Ovary (tissue), 10 donors: ENCODE measurements at regions of chr7 and their contacts with region 1.

Region 1: GRCh38 chr7:768881-769504 is 41.9 kb upstream of the PRKAR1B start:
- DNase-seq: peak; percentile 82 to 90 (median 87)
- H3K4me3 ChIP-seq: peak overlapping the region; percentile 11
- H3K27ac ChIP-seq: peak overlapping the region in 1 of 2 donors; percentile 87
- H3K4me1 ChIP-seq: peaks cover 24% of the 10 kb centered on the region
- H3K27me3 ChIP-seq: no peaks in the 10 kb centered on the region
- CTCF ChIP-seq: peak in 1 of 3 donors; percentile 6
- EP300 ChIP-seq: no peak
- POLR2A ChIP-seq: peak; percentile 5

Region 2: DNA sequence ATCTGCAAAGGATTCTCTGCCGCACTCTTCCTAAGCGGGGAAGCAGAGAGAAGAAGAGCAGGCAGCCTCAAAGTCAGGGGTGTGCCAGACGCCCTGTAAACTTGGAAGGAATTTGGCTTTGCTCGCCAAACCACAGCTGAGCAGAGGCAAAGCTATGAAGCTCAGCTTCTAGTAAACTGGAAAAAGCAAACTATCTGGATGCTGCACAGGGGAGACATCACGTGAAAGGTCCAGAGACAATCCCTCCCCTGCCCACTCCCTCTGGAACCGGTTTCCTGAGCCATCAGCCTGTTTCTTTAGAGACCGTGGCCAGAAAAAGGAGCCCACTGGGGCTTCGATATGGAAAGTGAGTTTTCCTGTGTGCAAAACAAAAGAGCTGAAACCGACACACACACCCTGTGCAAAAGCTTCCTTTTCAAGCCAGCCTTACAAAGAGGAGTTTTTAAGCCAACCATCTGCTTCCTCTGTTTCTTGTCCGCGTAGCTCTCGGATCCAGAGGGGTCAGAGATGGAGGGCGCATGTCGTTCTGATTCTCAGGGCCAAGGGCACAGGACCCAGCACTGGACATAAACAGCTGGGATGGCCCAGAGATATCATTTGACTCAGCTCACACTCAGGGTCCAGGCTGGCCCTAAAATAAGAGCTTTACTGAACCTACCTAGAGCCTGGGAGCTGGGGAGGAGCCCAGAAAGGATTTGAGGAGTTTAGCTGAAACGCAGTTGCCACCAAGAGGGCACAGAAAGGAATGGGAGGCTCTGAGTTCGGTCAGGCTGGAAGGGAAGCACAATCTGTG is 100.7 kb before region 1 on chr7:
- intact Hi-C with region 1: loop called in 2 of 4 experiments (anchors 5 to 10 kb)
- DNase-seq: peak; percentile 53 to 79 (median 72)
- H3K4me3 ChIP-seq: no peak overlapping the region
- H3K27ac ChIP-seq: peak overlapping the region in 1 of 2 donors; percentile 63
- H3K4me1 ChIP-seq: peaks cover 35% of the 10 kb centered on the region
- H3K27me3 ChIP-seq: no peaks in the 10 kb centered on the region
- CTCF ChIP-seq: no peak
- EP300 ChIP-seq: no peak
- POLR2A ChIP-seq: no peak

Region 3: GRCh38 chr7:706721-707120 is 62.3 kb before region 1 on chr7:
- intact Hi-C with region 1: loop called in 1 of 4 experiments (anchors 10 kb)
- DNase-seq: peak in 4 of 5 donors; percentile 5 to 28 (median 15)
- H3K4me3 ChIP-seq: no peak overlapping the region
- H3K27ac ChIP-seq: no peak overlapping the region
- H3K4me1 ChIP-seq: peaks cover 6% of the 10 kb centered on the region
- H3K27me3 ChIP-seq: no peaks in the 10 kb centered on the region
- CTCF ChIP-seq: no peak
- EP300 ChIP-seq: no peak
- POLR2A ChIP-seq: no peak